CD4-positive, alpha-beta T cell (primary cell): ENCODE measurements at regions of chr5 and their contacts with region 1.

Region 1: GRCh38 chr5:55994574-55995333 is at the start of gene IL6ST:
- DNase-seq: peak; percentile 90 to 99 (median 96)
- ATAC-seq: peak; percentile 86
- H3K4me3 ChIP-seq: peak within 1 kb of the TSS; percentile 95
- H3K4me3 Mint-ChIP-seq: peak within 1 kb of the TSS; percentile 97
- H3K27ac ChIP-seq: peak within 1 kb of the TSS; percentile 91 to 99
- H3K27ac Mint-ChIP-seq: peak within 1 kb of the TSS; percentile 94
- H3K4me1 ChIP-seq: peaks cover 13% of the 10 kb centered on the region
- H3K4me1 Mint-ChIP-seq: peaks cover 60% of the 10 kb centered on the region
- H3K27me3 ChIP-seq: no peaks in the 10 kb centered on the region
- H3K27me3 Mint-ChIP-seq: no peaks in the 10 kb centered on the region
- CTCF ChIP-seq: no peak
- total RNA-seq, gene IL6ST: 377 to 404 TPM

Region 2: DNA sequence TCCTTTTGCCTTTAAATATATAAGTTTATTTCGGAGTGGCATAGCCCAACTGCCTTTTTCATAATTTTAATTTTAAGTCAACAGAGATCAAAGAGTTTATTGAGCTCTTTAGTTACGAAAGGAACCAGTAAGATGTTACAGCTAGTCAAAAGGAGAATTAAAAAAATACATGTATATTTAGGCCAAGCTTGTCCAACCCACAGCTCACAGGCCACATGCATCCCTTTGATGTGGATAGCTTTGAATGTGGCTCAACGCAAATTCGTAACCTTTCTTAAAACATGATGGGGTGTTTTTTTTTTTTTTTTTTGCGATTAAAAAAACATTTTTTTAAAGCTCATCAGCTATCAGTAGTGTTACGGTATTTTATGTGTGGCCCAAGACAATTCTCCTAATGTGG is 193.8 kb before region 1 on chr5:
- CTCF ChIA-PET with region 1: no interaction called
- POLR2A ChIA-PET with region 1: no interaction called
- intact Hi-C with region 1: no loop called
- DNase-seq: peak in 3 of 14 experiments; percentile 14 to 44 (median 28)
- ATAC-seq: no peak
- H3K4me3 ChIP-seq: no peak overlapping the region
- H3K4me3 Mint-ChIP-seq: no peak overlapping the region
- H3K27ac ChIP-seq: no peak overlapping the region
- H3K27ac Mint-ChIP-seq: no peak overlapping the region
- H3K4me1 ChIP-seq: no peaks in the 10 kb centered on the region
- H3K4me1 Mint-ChIP-seq: no peaks in the 10 kb centered on the region
- H3K27me3 ChIP-seq: no peaks in the 10 kb centered on the region
- H3K27me3 Mint-ChIP-seq: no peaks in the 10 kb centered on the region
- CTCF ChIP-seq: no peak

Region 3: GRCh38 chr5:56012281-56012963 is 17.7 kb after region 1 on chr5:
- CTCF ChIA-PET with region 1: interaction called, 3 read pairs
- POLR2A ChIA-PET with region 1: interaction called, 114 read pairs
- intact Hi-C with region 1: loop called in 1 of 2 experiments (anchors 1 kb)
- DNase-seq: peak in 8 of 14 experiments; percentile 13 to 82 (median 49)
- ATAC-seq: peak; percentile 94
- H3K4me3 ChIP-seq: no peak overlapping the region
- H3K4me3 Mint-ChIP-seq: peak overlapping the region; percentile 16
- H3K27ac ChIP-seq: peak overlapping the region; percentile 29 to 53
- H3K27ac Mint-ChIP-seq: peak overlapping the region; percentile 75
- H3K4me1 ChIP-seq: peaks cover 33% of the 10 kb centered on the region
- H3K4me1 Mint-ChIP-seq: peaks cover 43% of the 10 kb centered on the region
- H3K27me3 ChIP-seq: no peaks in the 10 kb centered on the region
- H3K27me3 Mint-ChIP-seq: no peaks in the 10 kb centered on the region
- CTCF ChIP-seq: no peak

Region 4: DNA sequence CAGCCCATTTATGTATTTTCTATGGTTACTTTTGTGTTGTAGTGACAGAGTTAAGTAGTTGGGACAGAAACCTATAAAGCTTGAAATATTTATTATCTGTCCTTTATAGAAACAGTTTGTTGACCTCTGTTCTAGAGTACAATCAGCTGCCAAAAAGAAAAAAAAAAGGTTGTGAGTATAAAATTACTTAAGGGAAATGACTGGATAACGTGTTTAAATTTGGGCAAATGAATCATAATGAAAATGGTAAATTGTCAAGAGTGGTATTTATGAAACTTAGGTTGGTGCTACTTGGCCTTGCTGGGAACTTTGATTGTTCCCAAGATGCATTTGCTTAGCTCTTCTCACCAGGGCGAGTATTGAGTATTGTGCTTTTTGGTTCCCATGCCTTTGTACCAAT is 70.2 kb after region 1 on chr5:
- CTCF ChIA-PET with region 1: interaction called, 3 read pairs
- POLR2A ChIA-PET with region 1: interaction called, 87 read pairs
- intact Hi-C with region 1: loop called in 1 of 2 experiments (anchors 5 kb)
- DNase-seq: no peak
- ATAC-seq: no peak
- H3K4me3 ChIP-seq: no peak overlapping the region
- H3K4me3 Mint-ChIP-seq: no peak overlapping the region
- H3K27ac ChIP-seq: no peak overlapping the region
- H3K27ac Mint-ChIP-seq: peak overlapping the region; percentile 57
- H3K4me1 ChIP-seq: peaks cover 35% of the 10 kb centered on the region
- H3K4me1 Mint-ChIP-seq: peaks cover 63% of the 10 kb centered on the region
- H3K27me3 ChIP-seq: no peaks in the 10 kb centered on the region
- H3K27me3 Mint-ChIP-seq: no peaks in the 10 kb centered on the region
- CTCF ChIP-seq: no peak

Region 5: DNA sequence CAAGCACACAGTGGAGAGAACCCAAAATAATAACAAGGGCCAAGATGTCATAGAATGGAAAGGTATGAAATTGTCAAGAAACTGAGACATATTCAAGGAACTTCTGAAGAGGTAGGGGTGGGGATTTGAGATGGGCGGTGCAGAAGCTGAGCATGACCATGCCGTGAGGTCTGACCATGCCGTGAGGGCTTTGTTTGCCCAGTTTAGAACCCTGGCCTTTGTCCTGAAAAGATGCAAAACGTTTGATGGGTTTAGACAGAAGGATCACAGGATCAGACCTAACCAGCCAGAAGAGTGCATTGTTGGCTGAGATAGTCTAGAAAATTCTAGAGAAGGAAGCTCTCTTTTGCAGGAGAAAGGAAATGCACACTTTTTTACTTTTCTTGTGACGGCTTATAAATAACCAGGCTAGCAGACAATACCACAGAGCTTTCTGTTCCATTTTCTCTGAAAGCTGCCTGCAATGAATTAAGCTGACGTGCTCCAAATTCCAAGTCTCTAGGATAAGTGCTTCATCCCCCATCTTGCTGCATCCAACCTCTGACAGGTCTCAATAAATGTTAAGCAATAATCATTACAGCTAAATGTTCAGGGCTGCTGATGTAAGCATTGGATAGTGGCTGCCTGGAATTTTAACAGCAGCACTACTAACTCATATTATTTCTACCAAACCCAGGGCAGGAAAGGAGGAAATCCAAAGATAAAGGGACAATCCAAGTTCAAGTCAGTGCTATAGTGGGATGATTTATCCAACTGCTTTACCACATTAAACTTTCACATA is 110.9 kb after region 1 on chr5:
- CTCF ChIA-PET with region 1: no interaction called
- POLR2A ChIA-PET with region 1: interaction called, 38 read pairs
- intact Hi-C with region 1: loop called in 1 of 2 experiments (anchors 2 kb)
- DNase-seq: no peak
- ATAC-seq: peak; percentile 13
- H3K4me3 ChIP-seq: no peak overlapping the region
- H3K4me3 Mint-ChIP-seq: peak overlapping the region; percentile 73
- H3K27ac ChIP-seq: peak overlapping the region; percentile 39 to 45
- H3K27ac Mint-ChIP-seq: peak overlapping the region; percentile 88
- H3K4me1 ChIP-seq: peaks cover 38% of the 10 kb centered on the region
- H3K4me1 Mint-ChIP-seq: peaks cover 77% of the 10 kb centered on the region
- H3K27me3 ChIP-seq: no peaks in the 10 kb centered on the region
- H3K27me3 Mint-ChIP-seq: no peaks in the 10 kb centered on the region
- CTCF ChIP-seq: no peak

Region 6: DNA sequence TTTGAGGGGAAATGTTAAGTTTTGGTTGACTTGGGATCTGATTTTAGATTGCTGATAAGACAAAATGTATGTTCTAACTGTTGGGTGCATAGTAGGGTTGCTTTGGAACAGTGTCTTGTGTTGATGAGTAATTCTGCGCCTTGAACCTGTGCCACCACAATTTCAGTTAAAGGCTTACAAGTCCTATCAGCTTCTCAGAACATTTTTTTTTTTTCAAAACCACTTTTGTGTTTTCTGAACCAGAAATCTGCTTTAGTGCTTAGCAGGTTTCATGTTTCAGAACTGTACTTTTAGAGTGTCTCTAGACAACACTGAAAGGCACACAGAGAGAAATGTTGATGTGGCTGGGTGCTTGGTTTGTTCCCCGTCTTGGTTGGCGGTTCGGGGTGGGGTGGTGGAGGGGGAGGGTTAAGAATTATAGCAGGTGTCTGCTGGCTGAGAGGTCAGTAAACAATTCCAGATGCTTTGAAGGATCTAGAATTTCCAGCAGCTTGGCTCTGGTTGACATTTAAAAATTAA is 153.8 kb after region 1 on chr5:
- CTCF ChIA-PET with region 1: interaction called, 3 read pairs
- POLR2A ChIA-PET with region 1: interaction called, 17 read pairs
- intact Hi-C with region 1: loop called in 1 of 2 experiments (anchors 5 kb)
- DNase-seq: peak in 13 of 14 experiments; percentile 28 to 75 (median 51)
- ATAC-seq: peak; percentile 80
- H3K4me3 ChIP-seq: no peak overlapping the region
- H3K4me3 Mint-ChIP-seq: peak overlapping the region; percentile 62
- H3K27ac ChIP-seq: peak overlapping the region; percentile 42 to 46
- H3K27ac Mint-ChIP-seq: peak overlapping the region; percentile 97
- H3K4me1 ChIP-seq: peaks cover 48% of the 10 kb centered on the region
- H3K4me1 Mint-ChIP-seq: peaks cover 74% of the 10 kb centered on the region
- H3K27me3 ChIP-seq: no peaks in the 10 kb centered on the region
- H3K27me3 Mint-ChIP-seq: no peaks in the 10 kb centered on the region
- CTCF ChIP-seq: no peak

Region 7: GRCh38 chr5:56814963-56815658 is 820.4 kb after region 1 on chr5 and contains the start of gene MAP3K1:
- CTCF ChIA-PET with region 1: no interaction called
- POLR2A ChIA-PET with region 1: interaction called, 3 read pairs
- intact Hi-C with region 1: loop called in 1 of 2 experiments (anchors 10 kb)
- DNase-seq: peak; percentile 69 to 94 (median 80)
- ATAC-seq: peak; percentile 71
- H3K4me3 ChIP-seq: peak within 1 kb of the TSS; percentile 66
- H3K4me3 Mint-ChIP-seq: peak within 1 kb of the TSS; percentile 99
- H3K27ac ChIP-seq: peak within 1 kb of the TSS; percentile 78 to 82
- H3K27ac Mint-ChIP-seq: peak within 1 kb of the TSS; percentile 97
- H3K4me1 ChIP-seq: peaks cover 10% of the 10 kb centered on the region
- H3K4me1 Mint-ChIP-seq: peaks cover 43% of the 10 kb centered on the region
- H3K27me3 ChIP-seq: no peaks in the 10 kb centered on the region
- H3K27me3 Mint-ChIP-seq: no peaks in the 10 kb centered on the region
- CTCF ChIP-seq: no peak
- total RNA-seq, gene MAP3K1: 59.4 to 62.5 TPM